ENCODE measurements at regions of chr19 and their contacts with region 1.

Region 1: GRCh38 chr19:45692187-45693105 is at the start of gene QPCTL:
- DNase-seq: peak; percentile 100
- H3K4me3 ChIP-seq: peak within 1 kb of the TSS; percentile 72 to 91 (median 83)
- H3K27ac ChIP-seq: peak within 1 kb of the TSS; percentile 93
- H3K4me1 ChIP-seq: peaks cover 8% of the 10 kb centered on the region
- H3K27me3 ChIP-seq: no peaks in the 10 kb centered on the region
- CTCF ChIP-seq: no peak
- total RNA-seq, gene QPCTL: 22.5 to 22.6 TPM

Region 2: GRCh38 chr19:45478454-45479238 is 213.8 kb before region 1 on chr19:
- CTCF ChIA-PET with region 1: no interaction called
- dilution Hi-C with region 1: loop called (anchors 10 kb)
- in situ Hi-C with region 1: no loop called
- intact Hi-C with region 1: no loop called
- DNase-seq: peak; percentile 87
- H3K4me3 ChIP-seq: peak overlapping the region; percentile 47 to 58 (median 56)
- H3K27ac ChIP-seq: peak overlapping the region; percentile 99
- H3K4me1 ChIP-seq: peaks cover 5% of the 10 kb centered on the region
- H3K27me3 ChIP-seq: no peaks in the 10 kb centered on the region
- CTCF ChIP-seq: peak; percentile 96 to 98

Region 3: GRCh38 chr19:45558399-45558878 is 134.0 kb before region 1 on chr19:
- CTCF ChIA-PET with region 1: interaction called, 10 read pairs
- dilution Hi-C with region 1: no loop called
- in situ Hi-C with region 1: no loop called
- intact Hi-C with region 1: no loop called
- DNase-seq: peak; percentile 40
- H3K4me3 ChIP-seq: no peak overlapping the region
- H3K27ac ChIP-seq: no peak overlapping the region
- H3K4me1 ChIP-seq: peaks cover 20% of the 10 kb centered on the region
- H3K27me3 ChIP-seq: no peaks in the 10 kb centered on the region
- CTCF ChIP-seq: peak; percentile 88 to 90

Region 4: GRCh38 chr19:45591004-45591637 is 101.3 kb before region 1 on chr19:
- CTCF ChIA-PET with region 1: interaction called, 3 read pairs
- dilution Hi-C with region 1: loop called (anchors 5 kb)
- in situ Hi-C with region 1: no loop called
- intact Hi-C with region 1: loop called (anchors 1 kb)
- DNase-seq: peak; percentile 34
- H3K4me3 ChIP-seq: no peak overlapping the region
- H3K27ac ChIP-seq: no peak overlapping the region
- H3K4me1 ChIP-seq: peaks cover 5% of the 10 kb centered on the region
- H3K27me3 ChIP-seq: no peaks in the 10 kb centered on the region
- CTCF ChIP-seq: peak; percentile 51 to 71

Region 5: DNA sequence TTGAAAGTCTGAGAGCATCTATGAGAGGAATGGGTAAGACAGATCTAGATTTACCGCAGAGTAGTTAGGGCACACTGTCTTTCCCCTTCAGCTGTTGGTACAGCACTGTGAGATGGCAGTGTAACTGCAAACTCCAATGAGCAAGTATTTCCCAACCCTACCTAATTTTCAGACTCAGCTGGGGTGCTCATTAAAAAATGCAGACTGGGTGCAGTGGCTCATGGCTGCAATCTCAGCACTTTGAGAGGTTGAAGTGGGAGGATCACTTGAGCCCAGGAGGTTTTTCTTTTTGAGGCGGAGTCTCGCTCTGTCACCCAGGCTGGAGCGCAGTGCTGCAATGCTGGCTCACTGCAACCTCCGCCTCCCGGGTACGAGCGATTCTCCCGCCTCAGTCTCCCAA is 12.7 kb after region 1 on chr19:
- CTCF ChIA-PET with region 1: interaction called, 19 read pairs
- dilution Hi-C with region 1: no loop called
- in situ Hi-C with region 1: no loop called
- intact Hi-C with region 1: no loop called
- DNase-seq: no peak
- H3K4me3 ChIP-seq: no peak overlapping the region
- H3K27ac ChIP-seq: no peak overlapping the region
- H3K4me1 ChIP-seq: no peaks in the 10 kb centered on the region
- H3K27me3 ChIP-seq: no peaks in the 10 kb centered on the region
- CTCF ChIP-seq: no peak

Region 6: DNA sequence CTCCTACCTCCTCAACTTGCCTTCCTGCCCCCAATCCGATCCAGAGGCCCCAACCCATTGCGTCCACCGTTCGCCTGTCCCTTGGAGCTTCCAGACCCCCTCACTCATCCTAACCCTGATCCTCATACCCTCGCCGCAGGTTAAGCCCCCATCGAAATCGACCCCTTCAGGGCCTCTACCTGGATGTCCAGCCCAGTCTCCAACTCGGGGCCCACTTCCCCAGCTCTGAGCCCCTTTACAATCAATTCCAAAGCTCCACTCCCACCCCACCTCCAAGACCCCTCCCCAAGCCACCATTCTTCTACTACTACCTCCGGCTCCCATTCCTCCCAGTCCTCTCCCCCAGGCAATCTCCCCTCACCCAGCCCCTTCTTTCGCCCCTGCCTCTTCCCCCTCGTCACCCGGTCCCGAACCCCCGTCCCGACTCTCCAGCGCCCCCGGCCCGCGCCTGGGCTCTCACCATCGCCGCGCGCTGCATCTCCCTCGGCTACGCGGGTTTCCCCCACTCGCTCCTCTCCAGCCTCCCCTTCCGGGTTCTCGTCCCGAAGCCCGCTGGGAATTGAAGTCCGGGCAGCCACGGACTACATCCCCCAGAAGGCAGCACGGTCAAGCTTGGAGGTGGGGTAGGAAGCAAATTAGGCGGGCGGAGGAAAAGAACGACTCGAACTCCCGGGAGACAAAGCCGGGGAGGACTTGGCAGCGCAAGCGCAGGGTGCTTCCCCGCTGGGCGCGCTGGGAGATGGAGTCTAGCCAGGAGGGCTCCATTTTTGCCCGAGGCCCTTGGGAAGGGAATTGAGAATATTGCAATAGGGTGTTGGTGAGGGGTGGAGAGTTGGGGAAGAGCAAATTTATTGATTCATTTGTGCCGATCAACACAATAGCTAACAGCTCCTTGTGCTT is 38.2 kb after region 1 on chr19 and contains the start of gene FBXO46:
- CTCF ChIA-PET with region 1: no interaction called
- dilution Hi-C with region 1: loop called (anchors 5 kb)
- in situ Hi-C with region 1: no loop called
- intact Hi-C with region 1: no loop called
- DNase-seq: peak; percentile 99
- H3K4me3 ChIP-seq: peak within 1 kb of the TSS; percentile 72 to 86 (median 79)
- H3K27ac ChIP-seq: peak within 1 kb of the TSS; percentile 64
- H3K4me1 ChIP-seq: peaks cover 4% of the 10 kb centered on the region
- H3K27me3 ChIP-seq: no peaks in the 10 kb centered on the region
- CTCF ChIP-seq: peak in 1 of 2 donors; percentile 32
- total RNA-seq, gene FBXO46: 9.5 to 19.5 TPM

Region 7: DNA sequence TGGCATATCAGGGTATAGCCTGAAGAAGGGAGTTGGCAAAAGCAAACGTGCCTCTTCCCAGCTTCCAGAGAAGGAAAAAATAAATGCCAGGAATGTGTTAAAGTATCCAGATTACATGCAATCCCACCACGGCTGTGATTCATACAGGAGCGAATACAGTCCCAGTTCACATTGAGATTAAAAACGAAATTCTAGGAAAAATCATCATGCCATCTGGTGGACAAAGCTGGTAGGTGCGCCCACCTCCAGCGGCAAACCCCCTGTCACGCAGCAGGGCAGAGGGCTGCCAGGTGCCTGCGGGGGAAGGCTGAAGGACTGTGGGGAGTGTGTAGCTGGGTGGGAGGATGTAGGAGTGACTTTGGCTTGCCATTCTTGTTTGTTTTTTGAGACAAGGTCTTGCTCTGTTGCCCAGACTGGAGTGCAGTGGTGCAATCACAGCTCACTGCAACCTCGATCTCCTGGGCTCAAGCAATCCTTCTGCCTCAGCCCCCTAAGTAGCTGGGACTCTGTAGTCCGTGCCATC is 106.6 kb after region 1 on chr19:
- CTCF ChIA-PET with region 1: interaction called, 4 read pairs
- dilution Hi-C with region 1: no loop called
- in situ Hi-C with region 1: no loop called
- intact Hi-C with region 1: loop called (anchors 1 kb)
- DNase-seq: peak; percentile 41
- H3K4me3 ChIP-seq: no peak overlapping the region
- H3K27ac ChIP-seq: no peak overlapping the region
- H3K4me1 ChIP-seq: peaks cover 3% of the 10 kb centered on the region
- H3K27me3 ChIP-seq: no peaks in the 10 kb centered on the region
- CTCF ChIP-seq: peak; percentile 78 to 82

Measured in mammary epithelial cell (primary cell).